Activated CD4-positive, alpha-beta T cell treated with anti-CD3 and anti-CD28 coated beads, Interleukin-2, amount 10 ng/mL, durations not matched to agents 24 days and 14 days (primary cell): ENCODE measurements at regions of chr16 and their contacts with region 1.

Region 1: DNA sequence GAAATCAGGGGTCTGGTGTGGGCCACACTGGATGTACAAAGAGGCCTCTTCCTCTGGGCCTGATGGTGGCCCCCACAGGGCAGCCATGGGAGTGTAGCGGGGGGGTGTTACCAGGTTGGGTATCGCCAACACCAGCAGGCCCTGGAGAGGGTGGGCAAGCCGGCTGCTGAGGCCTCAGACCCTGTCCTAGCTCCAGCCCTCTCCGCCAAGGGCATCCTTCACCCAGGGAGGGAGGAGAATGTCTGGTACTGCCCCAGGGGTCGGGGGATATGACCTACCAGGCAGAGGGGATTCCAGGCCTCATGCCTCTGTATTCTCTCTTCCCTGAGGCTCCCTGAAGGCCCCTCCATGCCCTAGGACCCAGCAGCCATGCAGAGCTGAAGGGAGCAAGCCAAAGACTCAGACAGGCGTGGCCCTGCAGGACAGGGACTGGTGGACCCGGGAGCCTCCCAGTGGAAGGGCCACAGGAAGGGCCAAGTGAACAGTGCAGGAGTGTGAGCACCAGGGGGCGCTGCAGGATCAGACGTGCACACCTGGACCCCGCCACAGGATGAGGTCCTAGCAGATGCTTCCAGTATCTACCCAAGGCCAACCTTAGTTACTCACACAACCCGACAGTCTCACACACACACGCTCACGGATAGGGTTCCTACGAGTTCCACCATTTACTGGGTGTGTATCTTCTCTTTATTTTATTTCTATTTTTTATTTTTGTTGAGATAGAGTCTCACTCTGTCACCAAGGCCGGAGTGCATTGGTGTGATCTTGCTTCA is 10.9 kb upstream of the CES4A start:
- DNase-seq: peak; percentile 97
- H3K4me3 Mint-ChIP-seq: peak overlapping the region; percentile 22
- H3K27ac Mint-ChIP-seq: peak overlapping the region; percentile 85
- H3K4me1 Mint-ChIP-seq: peaks cover 49% of the 10 kb centered on the region
- H3K27me3 Mint-ChIP-seq: no peaks in the 10 kb centered on the region

Region 2: DNA sequence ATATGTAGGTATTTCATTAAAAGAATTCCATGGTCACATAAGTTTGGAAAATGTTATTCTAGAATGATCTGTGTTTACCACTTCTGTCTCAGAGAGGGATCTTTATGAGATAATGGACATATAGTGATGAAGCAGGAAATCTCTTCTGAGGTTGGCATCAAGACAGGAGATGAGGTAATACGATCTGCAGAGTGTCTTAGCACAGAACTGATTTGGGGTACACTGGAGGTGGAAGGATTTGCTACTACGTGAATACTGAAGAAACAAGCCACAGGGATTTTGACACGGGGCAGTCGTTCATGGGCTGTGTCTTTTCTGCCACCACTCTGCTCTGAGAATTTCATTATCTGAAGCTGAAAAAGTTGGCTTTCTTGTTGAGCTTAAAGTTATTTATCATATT is 57.0 kb after region 1 on chr16:
- intact Hi-C with region 1: no loop called
- DNase-seq: no peak
- H3K4me3 Mint-ChIP-seq: peak overlapping the region; percentile 7
- H3K27ac Mint-ChIP-seq: peak overlapping the region; percentile 42
- H3K4me1 Mint-ChIP-seq: peaks cover 57% of the 10 kb centered on the region
- H3K27me3 Mint-ChIP-seq: no peaks in the 10 kb centered on the region

Region 3: DNA sequence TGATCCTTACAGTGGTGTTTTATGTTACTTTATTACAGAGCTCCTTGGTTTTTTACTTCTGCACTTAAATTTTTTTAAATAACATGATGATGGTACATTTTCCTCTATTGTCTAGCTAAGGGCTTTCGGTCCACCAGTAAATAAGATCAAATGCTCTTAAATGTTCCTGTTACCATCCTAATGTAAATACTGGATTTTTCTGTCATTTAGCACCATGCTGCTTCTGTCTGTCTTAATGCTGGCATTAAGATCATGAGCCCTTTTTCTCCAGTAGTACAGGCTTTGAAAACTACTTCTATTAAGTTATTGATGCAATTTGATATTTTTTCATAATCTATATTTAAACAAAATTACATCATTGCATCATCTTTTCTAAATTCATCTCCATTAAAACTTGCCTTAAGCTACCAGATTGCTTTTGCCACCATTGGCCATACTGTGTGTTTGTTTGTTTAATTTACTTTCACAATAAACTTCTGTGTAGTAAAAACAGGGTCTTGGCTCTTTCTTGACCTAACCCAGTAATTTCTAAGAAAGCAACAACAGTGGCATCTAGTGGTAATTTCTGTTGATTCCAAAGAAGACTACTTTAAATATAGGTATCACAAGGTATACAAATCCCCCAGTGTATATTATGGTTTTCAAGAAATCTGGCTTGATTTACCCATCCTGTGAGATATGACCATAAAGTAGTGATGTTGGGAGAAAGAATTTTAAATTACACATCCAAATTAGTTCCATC is 123.2 kb after region 1 on chr16:
- intact Hi-C with region 1: loop called (anchors 2 kb)
- DNase-seq: no peak
- H3K4me3 Mint-ChIP-seq: no peak overlapping the region
- H3K27ac Mint-ChIP-seq: no peak overlapping the region
- H3K4me1 Mint-ChIP-seq: no peaks in the 10 kb centered on the region
- H3K27me3 Mint-ChIP-seq: no peaks in the 10 kb centered on the region

Region 4: GRCh38 chr16:67183627-67184328 is 206.3 kb after region 1 on chr16 and contains the start of gene MATCAP1:
- intact Hi-C with region 1: loop called (anchors 1 kb)
- DNase-seq: peak; percentile 98
- H3K4me3 Mint-ChIP-seq: no peak within 1 kb of the TSS
- H3K27ac Mint-ChIP-seq: peak within 1 kb of the TSS; percentile 45
- H3K4me1 Mint-ChIP-seq: peaks cover 19% of the 10 kb centered on the region
- H3K27me3 Mint-ChIP-seq: peaks cover 8% of the 10 kb centered on the region
- total RNA-seq, gene MATCAP1: 51.3 and 55.1 TPM in 2 replicates